ENCODE measurements at regions of chr17 and their contacts with region 1.

Region 1: GRCh38 chr17:35764123-35764991 is 3.7 kb downstream of the C17orf50 start:
- DNase-seq: peak; percentile 91
- ATAC-seq: peak; percentile 87
- H3K4me3 Mint-ChIP-seq: peak overlapping the region; percentile 80
- H3K27ac Mint-ChIP-seq: peak overlapping the region; percentile 76
- H3K4me1 Mint-ChIP-seq: peaks cover 17% of the 10 kb centered on the region
- H3K27me3 Mint-ChIP-seq: peaks cover 11% of the 10 kb centered on the region
- CTCF ChIP-seq: peak; percentile 83

Region 2: DNA sequence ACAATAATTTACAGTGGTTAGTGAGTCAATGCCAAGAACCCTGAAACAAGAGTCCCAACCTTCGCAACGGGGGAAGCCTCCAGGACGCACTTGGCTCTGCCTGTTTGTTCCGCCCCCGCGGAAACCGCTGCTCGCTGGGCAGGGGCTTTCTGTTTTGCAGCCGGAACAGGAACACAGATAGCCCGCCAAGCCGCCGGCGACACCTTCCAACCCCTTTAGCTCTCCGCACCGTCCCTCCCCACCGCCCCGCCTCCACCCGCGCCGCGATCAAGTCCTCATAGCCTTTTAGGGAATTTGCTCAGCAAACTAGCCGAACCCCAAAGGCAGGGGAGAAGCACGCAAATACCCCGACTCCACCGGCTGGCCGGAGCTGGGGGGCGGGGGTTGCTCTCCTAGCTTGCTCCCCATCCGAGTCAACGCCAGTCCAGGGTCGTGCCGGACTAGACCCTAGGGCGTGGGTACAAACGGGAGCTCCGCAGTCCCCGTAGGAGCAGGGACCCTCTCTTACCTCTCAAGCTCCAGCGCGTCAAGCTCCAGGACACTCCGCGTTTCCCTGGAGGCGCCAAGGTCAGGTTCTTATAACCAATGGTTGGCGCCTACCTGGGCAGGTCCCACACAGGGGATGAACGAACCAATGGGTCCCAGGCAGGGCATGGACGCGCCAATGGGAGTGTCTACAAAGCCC is 316.0 kb before region 1 on chr17 and contains the start of gene SLFN13:
- CTCF ChIA-PET with region 1: no interaction called
- POLR2A ChIA-PET with region 1: no interaction called
- DNase-seq: peak; percentile 85
- ATAC-seq: peak; percentile 94
- H3K4me3 Mint-ChIP-seq: peak within 1 kb of the TSS; percentile 79
- H3K27ac Mint-ChIP-seq: peak within 1 kb of the TSS; percentile 52; the same call in 1 of the 2 replicates
- H3K4me1 Mint-ChIP-seq: peaks cover 26% of the 10 kb centered on the region
- H3K27me3 Mint-ChIP-seq: peaks cover 99% of the 10 kb centered on the region
- CTCF ChIP-seq: no peak
- total RNA-seq, gene SLFN13: 19.7 to 22.1 TPM (median 20.8 TPM) in 3 replicates

Region 3: GRCh38 chr17:35596530-35597233 is 167.7 kb before region 1 on chr17:
- CTCF ChIA-PET with region 1: interaction called, 11 read pairs
- POLR2A ChIA-PET with region 1: no interaction called
- DNase-seq: peak; percentile 81
- ATAC-seq: peak; percentile 99
- H3K4me3 Mint-ChIP-seq: peak overlapping the region; percentile 45
- H3K27ac Mint-ChIP-seq: peak overlapping the region; percentile 71; the same call in 1 of the 2 replicates
- H3K4me1 Mint-ChIP-seq: peaks cover 6% of the 10 kb centered on the region
- H3K27me3 Mint-ChIP-seq: no peaks in the 10 kb centered on the region
- CTCF ChIP-seq: peak; percentile 83

Region 4: DNA sequence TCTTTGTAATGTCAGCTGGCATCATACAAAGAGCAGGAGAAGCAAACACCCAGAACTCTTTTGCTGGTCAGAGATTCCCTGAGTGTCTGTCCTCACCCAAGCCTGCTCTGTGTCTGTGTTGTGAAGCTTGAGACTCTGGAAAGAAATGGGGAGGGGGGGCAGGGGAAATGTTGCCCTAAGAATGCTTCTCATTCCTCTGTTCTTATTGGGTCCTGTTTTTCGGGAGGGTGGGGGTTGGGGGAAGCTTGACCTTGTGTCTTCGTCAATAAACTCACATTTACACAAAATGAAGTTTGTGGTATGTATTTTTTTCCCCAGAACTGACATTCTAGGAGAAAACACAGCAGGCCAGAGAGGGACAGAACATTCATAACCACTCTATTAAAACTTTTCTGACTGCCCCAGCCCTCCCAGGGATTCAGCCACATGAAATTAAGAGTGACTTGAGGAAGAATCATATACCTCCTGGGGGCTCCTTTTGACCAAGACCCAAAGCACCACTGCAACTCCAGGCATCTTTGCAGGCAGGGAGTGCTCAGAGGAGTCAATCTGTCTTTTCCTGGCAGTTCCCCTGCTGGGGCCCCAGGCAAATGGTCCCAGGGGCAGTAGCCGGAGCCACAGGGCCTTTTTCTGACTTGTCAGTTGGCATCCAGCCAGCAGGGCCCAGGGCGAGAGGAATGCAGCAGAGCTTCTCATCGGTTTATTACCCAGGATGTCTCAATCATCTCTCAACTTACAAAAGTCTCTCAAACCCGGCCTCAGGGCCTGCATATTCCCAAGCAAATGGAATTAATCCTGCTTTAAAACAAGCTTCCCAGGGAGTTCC is 38.0 kb before region 1 on chr17:
- CTCF ChIA-PET with region 1: interaction called, 34 read pairs
- POLR2A ChIA-PET with region 1: interaction called, 4 read pairs
- DNase-seq: no peak
- ATAC-seq: peak; percentile 13; the same call in 1 of the 2 replicates
- H3K4me3 Mint-ChIP-seq: no peak overlapping the region
- H3K27ac Mint-ChIP-seq: no peak overlapping the region
- H3K4me1 Mint-ChIP-seq: peaks cover 47% of the 10 kb centered on the region
- H3K27me3 Mint-ChIP-seq: peaks cover 16% of the 10 kb centered on the region
- CTCF ChIP-seq: no peak

Region 5: DNA sequence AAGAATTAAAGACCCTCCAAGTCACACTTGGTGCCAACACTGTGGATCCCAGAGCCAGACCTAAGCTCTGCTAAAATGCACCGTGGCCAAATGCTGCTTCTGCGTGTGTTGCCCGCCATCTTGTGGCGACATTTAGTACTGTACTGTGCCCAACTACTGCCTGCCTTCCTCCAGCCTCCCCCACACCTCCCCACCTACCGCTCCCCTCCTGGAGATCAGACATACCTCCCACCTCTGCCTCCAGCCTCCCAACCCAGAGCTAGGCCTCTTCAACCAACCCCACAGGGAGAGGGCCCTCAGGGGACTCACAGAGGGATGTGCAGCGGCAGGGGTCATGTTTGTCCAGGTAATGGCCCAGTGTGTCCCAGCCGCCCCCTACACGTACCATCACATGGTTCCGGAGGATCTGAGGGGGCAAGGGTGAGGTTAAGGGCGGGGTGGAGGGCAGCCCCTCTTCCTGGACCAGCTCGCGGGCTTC is 16.8 kb before region 1 on chr17:
- CTCF ChIA-PET with region 1: interaction called, 100 read pairs
- POLR2A ChIA-PET with region 1: interaction called, 4 read pairs
- DNase-seq: peak; percentile 87
- ATAC-seq: peak; percentile 80
- H3K4me3 Mint-ChIP-seq: no peak overlapping the region
- H3K27ac Mint-ChIP-seq: no peak overlapping the region
- H3K4me1 Mint-ChIP-seq: peaks cover 22% of the 10 kb centered on the region
- H3K27me3 Mint-ChIP-seq: peaks cover 48% of the 10 kb centered on the region
- CTCF ChIP-seq: peak; percentile 85

Region 6: DNA sequence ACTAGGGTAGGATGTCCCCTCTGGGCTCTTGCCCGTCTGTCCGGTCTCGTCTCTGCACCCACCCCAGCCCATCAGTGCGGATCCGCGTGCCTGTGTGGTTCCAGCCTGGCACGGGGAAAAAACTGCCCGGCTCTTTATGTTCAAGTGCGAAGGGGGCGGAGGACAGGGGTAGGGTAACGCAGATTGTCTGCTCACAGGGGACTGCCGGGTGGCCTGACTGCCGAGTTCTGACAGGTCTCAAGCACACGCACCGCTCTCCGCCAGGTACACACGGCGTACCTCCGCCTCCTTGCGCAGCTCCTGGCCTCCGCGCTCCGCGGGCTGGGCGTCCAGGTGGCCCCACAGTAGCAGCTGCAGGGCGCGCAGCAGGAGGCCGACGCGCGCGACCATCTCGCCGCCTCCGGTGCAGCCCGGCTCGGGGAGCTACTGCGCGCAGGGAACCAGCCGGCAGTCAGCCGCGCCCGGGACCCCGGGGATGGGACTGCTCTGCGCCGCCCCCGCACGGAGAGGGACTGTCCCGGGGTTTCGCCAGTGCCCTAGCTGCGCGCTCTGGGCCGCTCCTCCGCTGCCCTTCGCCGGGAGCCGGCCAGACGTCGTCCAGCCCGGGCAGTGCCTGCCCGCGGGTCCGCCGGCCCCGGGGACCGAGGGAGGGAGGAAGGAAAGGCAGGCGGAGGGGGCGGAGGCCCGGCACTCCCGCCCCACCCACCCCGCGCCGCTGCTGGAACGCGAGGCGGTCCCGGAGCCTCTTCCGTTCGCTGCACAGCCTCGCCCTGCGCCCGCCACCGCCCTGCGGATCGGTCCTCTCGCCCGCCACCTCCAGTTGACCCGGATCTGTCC is 30.8 kb after region 1 on chr17 and contains the start of gene MMP28:
- CTCF ChIA-PET with region 1: interaction called, 53 read pairs
- POLR2A ChIA-PET with region 1: interaction called, 3 read pairs
- DNase-seq: peak; percentile 61
- ATAC-seq: peak; percentile 72
- H3K4me3 Mint-ChIP-seq: peak within 1 kb of the TSS; percentile 67
- H3K27ac Mint-ChIP-seq: no peak within 1 kb of the TSS
- H3K4me1 Mint-ChIP-seq: peaks cover 10% of the 10 kb centered on the region
- H3K27me3 Mint-ChIP-seq: peaks cover 78% of the 10 kb centered on the region
- CTCF ChIP-seq: no peak
- total RNA-seq, gene MMP28: 0.22 TPM in 1 of 3 replicates, not detected in the others

Region 7: DNA sequence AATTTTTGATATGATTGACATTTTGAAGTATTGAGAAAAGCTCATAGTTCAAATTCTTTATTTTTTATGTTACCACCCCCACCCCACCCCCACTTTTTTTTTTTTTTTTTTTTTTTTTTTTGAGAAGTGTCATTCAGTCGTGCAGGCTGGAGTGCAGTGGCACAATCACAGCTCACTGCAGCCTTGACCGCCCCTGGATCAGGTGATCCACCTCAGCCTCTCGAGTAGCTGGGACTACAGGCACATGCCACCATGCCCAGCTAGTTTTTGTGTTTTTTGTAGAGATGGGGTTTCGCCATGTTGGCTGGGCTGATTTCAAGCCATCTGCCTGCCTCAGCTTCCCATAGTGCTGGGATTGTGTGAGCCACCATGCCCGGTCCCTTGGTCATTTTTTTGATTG is 52.4 kb after region 1 on chr17:
- CTCF ChIA-PET with region 1: interaction called, 22 read pairs
- POLR2A ChIA-PET with region 1: interaction called, 4 read pairs
- DNase-seq: no peak
- ATAC-seq: no peak
- H3K4me3 Mint-ChIP-seq: no peak overlapping the region
- H3K27ac Mint-ChIP-seq: no peak overlapping the region
- H3K4me1 Mint-ChIP-seq: peaks cover 12% of the 10 kb centered on the region
- H3K27me3 Mint-ChIP-seq: no peaks in the 10 kb centered on the region
- CTCF ChIP-seq: no peak

Region 8: GRCh38 chr17:35884394-35884793 is 120.0 kb after region 1 on chr17:
- CTCF ChIA-PET with region 1: no interaction called
- POLR2A ChIA-PET with region 1: no interaction called
- DNase-seq: no peak
- ATAC-seq: no peak
- H3K4me3 Mint-ChIP-seq: no peak overlapping the region
- H3K27ac Mint-ChIP-seq: no peak overlapping the region
- H3K4me1 Mint-ChIP-seq: no peaks in the 10 kb centered on the region
- H3K27me3 Mint-ChIP-seq: no peaks in the 10 kb centered on the region
- CTCF ChIP-seq: no peak

Region 9: DNA sequence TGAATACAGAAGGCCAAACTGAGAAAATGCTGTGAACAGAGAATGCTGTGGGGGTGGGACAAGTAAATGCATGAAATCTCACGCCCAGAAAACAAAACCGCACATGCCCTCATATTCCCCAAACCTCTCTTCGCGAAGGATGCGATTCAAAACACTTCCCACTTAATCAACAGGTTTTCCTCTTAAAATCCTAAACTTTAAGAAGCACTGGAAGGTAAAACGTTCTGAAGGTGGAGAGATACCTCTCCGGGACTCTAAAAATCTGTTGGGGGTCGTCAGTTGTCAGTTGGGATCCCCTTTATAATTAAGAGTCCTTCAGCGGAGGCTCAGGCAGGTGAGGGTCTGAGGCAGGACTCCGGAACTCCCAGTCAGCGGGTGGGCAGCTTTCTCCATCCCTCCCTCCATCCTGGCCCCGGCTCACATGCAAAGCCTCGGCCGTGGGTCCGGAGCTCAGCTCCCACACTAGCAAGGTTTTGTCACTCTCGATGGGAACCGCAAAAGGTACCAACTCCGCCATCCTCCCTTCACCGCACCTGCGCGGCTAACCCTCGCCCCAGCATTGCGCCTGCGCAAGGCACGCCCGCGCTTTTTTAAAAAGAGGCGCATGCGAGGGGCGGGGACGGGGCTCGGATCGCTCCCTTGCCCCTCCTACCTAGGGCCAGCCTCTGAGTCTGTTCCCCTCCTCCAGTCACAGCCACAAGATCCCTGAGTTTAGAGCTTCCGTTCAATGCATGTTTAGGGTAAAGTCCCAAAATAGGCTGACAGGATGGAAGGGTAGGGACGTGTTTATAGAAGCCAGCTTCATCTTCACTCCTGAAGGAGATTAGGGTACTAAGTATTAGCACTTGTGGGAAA is 166.1 kb after region 1 on chr17 and contains the start of gene RDM1:
- CTCF ChIA-PET with region 1: interaction called, 11 read pairs
- POLR2A ChIA-PET with region 1: no interaction called
- DNase-seq: peak; percentile 94
- ATAC-seq: peak; percentile 99
- H3K4me3 Mint-ChIP-seq: peak within 1 kb of the TSS; percentile 73
- H3K27ac Mint-ChIP-seq: peak within 1 kb of the TSS; percentile 19; the same call in 1 of the 2 replicates
- H3K4me1 Mint-ChIP-seq: peaks cover 25% of the 10 kb centered on the region
- H3K27me3 Mint-ChIP-seq: peaks cover 11% of the 10 kb centered on the region
- CTCF ChIP-seq: no peak
- total RNA-seq, gene RDM1: 4.7 to 6.4 TPM (median 5.2 TPM) in 3 replicates

Measured in WTC11 (cell line).